ENCODE measurements at regions of chr3 and their contacts with region 1.

Region 1: DNA sequence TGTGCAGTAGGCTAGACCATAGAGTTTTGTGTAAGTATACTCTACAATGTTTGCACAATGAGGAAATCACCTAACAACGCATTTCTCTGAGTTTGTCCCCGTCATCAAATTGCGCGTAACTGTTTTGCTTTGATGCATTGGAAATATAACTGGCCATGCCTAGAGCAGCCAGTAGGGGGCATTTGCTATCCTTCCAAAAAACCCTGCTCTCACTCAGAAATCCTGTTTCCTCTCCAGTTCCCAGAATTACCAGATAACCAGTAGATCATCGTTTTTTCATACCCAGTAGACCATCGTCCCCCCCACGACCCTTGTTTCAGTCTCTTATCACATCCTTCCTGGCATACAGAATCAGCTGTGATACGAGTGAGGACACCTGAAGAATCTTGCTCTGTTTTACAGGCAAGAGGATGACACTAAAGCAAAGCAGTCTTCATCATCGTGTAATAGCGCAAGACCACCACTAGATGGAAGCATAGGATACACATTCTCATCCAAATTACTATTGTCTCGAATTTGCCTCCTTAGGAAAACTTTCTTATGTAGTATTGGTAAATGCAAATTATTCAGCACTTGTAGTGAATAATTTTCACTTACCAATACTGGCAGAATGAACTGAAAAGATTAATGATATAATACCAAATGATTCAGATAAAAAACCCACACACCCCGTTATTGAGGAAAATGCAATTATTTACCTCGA is 4.4 kb upstream of the GABRR3 start:
- DNase-seq: peak; percentile 71
- H3K4me3 Mint-ChIP-seq: peak overlapping the region; percentile 84
- H3K27ac Mint-ChIP-seq: peak overlapping the region; percentile 90
- H3K4me1 Mint-ChIP-seq: peaks cover 22% of the 10 kb centered on the region
- H3K27me3 Mint-ChIP-seq: peaks cover 27% of the 10 kb centered on the region

Region 2: DNA sequence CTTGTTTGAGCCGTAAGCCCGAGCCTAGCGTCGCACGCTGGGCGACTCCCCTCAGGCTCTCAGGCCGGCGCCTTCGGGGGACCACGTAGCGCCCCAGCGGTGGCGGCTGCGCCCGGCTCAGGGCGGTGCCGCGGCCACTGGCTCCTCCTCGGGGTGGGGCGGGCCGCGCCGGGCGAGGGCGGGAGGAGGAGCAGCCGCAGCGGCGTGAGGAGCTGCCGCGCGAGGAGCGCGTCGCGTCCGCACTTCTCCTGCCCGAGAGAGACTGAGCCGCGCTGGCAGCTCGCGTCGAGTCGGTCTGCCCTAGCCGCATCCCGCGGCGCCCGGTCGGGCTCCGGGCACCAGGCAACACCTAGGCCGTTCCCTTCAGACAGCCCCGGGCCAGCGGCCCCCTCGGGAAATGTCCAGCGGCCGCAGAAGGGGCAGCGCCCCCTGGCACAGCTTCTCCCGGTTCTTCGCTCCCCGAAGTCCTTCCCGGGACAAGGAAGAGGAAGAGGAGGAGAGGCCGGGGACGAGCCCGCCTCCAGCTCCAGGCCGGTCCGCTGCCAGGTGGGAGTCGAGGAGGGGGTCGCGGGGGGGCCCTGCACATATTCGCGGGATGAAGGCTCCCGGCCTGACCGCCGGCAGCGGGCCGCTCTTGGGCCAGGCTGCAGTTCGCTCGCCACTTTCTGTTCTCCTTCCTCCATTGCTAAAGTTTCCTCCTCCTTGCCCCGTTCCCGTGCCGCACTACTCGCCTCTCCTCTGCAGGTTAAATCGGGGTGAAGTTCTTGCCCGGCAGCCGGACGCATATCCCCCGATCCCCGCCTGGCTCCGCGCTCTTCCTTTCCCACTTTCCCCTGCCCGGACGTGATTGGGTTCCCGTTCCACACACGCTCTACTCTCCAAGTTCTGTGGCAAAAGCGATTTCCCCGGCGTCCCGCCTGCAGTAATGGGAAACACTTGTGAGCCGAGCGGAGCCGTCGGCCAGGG is 217.4 kb before region 1 on chr3 and contains the start of gene CRYBG3:
- intact Hi-C with region 1: loop called (anchors 1 kb)
- DNase-seq: peak; percentile 86
- H3K4me3 Mint-ChIP-seq: peak within 1 kb of the TSS; percentile 99
- H3K27ac Mint-ChIP-seq: peak within 1 kb of the TSS; percentile 92
- H3K4me1 Mint-ChIP-seq: peaks cover 40% of the 10 kb centered on the region
- H3K27me3 Mint-ChIP-seq: peaks cover 34% of the 10 kb centered on the region
- total RNA-seq, gene CRYBG3: 6.5 and 6.8 TPM in 2 replicates

Region 3: DNA sequence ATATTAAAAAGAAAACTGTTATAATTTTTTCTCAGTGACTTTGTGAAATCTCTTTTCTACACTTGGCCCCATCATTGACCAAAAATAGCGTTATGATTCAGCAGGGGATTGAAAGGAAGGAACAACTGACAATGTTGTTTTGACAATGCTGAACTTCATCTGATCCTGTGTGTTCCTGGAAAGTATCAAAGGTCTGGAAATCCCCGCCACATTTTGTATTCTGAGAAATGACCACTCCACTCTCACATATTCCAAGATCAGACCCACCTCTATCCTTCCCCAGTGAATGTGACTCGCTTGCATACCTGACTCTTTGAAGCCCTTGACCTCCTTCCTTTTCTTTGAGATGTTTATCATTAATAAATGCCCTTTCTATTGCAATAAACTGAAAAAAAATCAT is 57.6 kb before region 1 on chr3:
- intact Hi-C with region 1: loop called (anchors 1 kb)
- DNase-seq: peak; percentile 43
- H3K4me3 Mint-ChIP-seq: peak overlapping the region; percentile 9
- H3K27ac Mint-ChIP-seq: peak overlapping the region; percentile 89
- H3K4me1 Mint-ChIP-seq: peaks cover 49% of the 10 kb centered on the region
- H3K27me3 Mint-ChIP-seq: no peaks in the 10 kb centered on the region

Region 4: GRCh38 chr3:98086873-98087272 is 47.4 kb after region 1 on chr3 and contains the start of gene OR5AC2:
- intact Hi-C with region 1: no loop called
- DNase-seq: no peak
- H3K4me3 Mint-ChIP-seq: no peak within 1 kb of the TSS
- H3K27ac Mint-ChIP-seq: no peak within 1 kb of the TSS
- H3K4me1 Mint-ChIP-seq: no peaks in the 10 kb centered on the region
- H3K27me3 Mint-ChIP-seq: peaks cover 5% of the 10 kb centered on the region
- total RNA-seq, gene OR5AC2: not detected in 2 replicates

Region 5: DNA sequence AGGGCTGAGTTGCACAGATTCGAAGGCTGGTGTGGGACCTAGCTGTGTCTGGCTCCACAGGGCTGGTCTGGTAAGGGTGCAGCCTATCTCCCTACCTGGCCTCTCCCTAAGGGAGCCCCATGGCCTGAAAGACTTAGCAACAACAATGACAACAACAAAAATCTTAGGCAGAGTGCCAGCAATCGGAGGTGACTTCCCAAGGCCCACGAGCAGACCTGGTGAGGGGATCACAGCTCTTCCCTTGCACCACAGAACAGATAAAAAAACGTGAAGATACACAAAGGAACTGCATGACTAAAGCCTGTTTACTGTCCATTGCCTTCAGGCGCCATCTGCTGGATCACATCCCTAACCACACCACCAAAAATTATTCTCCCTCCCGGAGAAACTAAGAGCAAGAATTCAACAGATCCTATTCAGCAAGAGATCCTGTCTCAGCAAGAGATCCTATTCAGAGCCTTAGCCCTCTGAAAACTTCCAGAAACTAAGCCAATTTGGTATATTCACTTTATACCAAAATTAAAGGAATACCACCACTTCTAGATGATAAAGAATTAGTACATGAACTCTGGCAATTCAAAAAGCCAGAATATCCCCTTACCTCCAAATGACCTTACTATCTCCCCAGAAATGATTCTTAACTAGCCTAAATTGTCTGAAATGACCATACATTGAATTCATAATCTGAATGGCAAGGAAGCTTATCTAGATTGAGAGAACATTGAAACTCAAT is 290.1 kb after region 1 on chr3:
- intact Hi-C with region 1: loop called (anchors 1 kb)
- DNase-seq: peak; percentile 28
- H3K4me3 Mint-ChIP-seq: no peak overlapping the region
- H3K27ac Mint-ChIP-seq: no peak overlapping the region
- H3K4me1 Mint-ChIP-seq: peaks cover 24% of the 10 kb centered on the region
- H3K27me3 Mint-ChIP-seq: peaks cover 32% of the 10 kb centered on the region

Region 6: DNA sequence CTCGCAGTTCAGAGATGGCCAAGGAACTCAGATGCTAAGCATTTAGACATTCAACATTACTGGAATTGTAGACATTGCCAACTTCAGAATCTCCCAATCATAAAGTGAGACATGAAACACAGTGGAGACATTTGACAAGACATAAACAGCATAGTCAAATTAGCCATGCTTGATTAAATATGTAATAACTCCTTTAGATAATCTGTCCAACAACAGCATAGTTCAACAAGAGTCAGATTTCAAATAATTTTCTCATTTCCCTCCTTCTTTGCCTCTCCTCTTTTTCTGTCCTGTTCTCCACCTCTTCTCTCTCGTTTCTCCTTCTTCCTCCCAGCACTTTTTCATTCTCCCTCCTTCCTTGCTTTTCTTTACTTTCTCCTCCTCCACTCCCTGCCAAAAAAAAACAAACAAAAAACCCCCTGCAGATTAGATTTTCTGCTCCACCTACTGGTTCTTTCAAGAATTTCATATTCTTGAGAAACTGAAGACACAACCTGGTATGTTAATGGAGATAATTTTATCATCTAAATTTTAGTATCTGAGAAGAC is 533.8 kb after region 1 on chr3:
- intact Hi-C with region 1: loop called (anchors 1 kb)
- DNase-seq: no peak
- H3K4me3 Mint-ChIP-seq: peak overlapping the region; percentile 46
- H3K27ac Mint-ChIP-seq: peak overlapping the region; percentile 61
- H3K4me1 Mint-ChIP-seq: peaks cover 64% of the 10 kb centered on the region
- H3K27me3 Mint-ChIP-seq: no peaks in the 10 kb centered on the region

Region 7: GRCh38 chr3:98901392-98902350 is 862.2 kb after region 1 on chr3 and contains the start of gene DCBLD2:
- intact Hi-C with region 1: loop called (anchors 2 kb)
- DNase-seq: peak; percentile 94
- H3K4me3 Mint-ChIP-seq: peak within 1 kb of the TSS; percentile 84
- H3K27ac Mint-ChIP-seq: peak within 1 kb of the TSS; percentile 51
- H3K4me1 Mint-ChIP-seq: peaks cover 12% of the 10 kb centered on the region
- H3K27me3 Mint-ChIP-seq: peaks cover 33% of the 10 kb centered on the region
- total RNA-seq, gene DCBLD2: 1.5 and 2.3 TPM in 2 replicates

Measured in activated T-helper 1 cell treated with anti-CD3 and anti-CD28 coated beads, Interleukin-12 subunit alpha, Interleukin-12 subunit beta, Interleukin-2, Interleukin-4 antibody, amounts not matched to agents 30 ng/mL and 10 ng/mL and 1 ng/mL, durations not matched to agents 14 hours and 24 hours and 36 hours (primary cell).